ENCODE measurements at regions of chr18 and their contacts with region 1.

Region 1: GRCh38 chr18:35386600-35387351 is 9.6 kb upstream of the ZNF396 start:
- DNase-seq: peak; percentile 75
- H3K4me3 Mint-ChIP-seq: no peak overlapping the region
- H3K27ac Mint-ChIP-seq: no peak overlapping the region
- H3K4me1 Mint-ChIP-seq: peaks cover 2% of the 10 kb centered on the region
- H3K27me3 Mint-ChIP-seq: peaks cover 33% of the 10 kb centered on the region

Region 2: DNA sequence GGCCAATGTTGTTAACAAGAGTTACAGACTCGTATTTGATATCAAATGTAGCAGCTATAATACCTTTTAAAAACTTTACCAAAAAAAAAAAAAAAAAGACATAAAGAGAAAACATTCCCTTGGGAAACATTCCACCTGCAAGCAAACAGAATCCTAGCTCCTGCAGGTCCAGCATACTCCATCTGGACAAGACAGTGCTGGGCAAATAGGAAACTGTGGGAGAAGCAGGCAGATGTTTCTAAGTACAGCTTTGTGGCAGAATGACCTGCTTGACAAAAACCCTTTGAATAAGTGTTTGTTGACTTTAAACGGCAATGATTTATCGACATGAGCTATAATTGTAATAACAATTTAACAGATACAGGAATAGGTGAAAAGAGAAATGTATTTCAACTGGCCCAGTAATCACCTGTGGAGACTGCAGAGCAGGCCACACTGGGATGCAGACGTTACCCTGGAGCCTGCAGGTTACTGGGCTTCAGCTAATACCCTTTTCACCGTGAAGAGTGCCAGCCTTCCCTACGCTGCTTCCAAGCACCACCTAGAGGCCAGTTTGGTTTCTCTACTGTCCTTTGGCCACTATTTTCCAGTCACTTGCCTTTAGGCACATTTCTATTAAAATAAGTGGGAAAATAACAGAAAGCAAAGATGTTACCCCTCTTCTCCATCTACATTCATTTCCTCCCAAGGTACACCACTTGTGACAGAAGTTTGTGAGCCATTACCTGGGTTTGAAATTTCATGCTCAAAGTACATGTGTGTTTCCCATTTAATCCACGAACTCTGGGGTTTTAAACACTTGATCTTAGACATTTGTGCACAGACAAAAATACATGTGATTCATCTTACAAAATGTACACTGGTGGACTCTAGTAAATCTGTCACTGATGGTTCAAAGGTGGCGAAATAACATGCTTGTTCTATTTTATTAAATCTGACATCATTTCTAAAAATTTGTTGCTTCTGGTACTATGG is 242.9 kb before region 1 on chr18:
- CTCF ChIA-PET with region 1: no interaction called
- DNase-seq: peak; percentile 54
- H3K4me3 Mint-ChIP-seq: no peak overlapping the region
- H3K27ac Mint-ChIP-seq: no peak overlapping the region
- H3K4me1 Mint-ChIP-seq: no peaks in the 10 kb centered on the region
- H3K27me3 Mint-ChIP-seq: no peaks in the 10 kb centered on the region

Region 3: GRCh38 chr18:35231052-35231451 is 155.7 kb before region 1 on chr18:
- CTCF ChIA-PET with region 1: interaction called, 30 read pairs
- DNase-seq: peak; percentile 86
- H3K4me3 Mint-ChIP-seq: peak overlapping the region; percentile 2
- H3K27ac Mint-ChIP-seq: no peak overlapping the region
- H3K4me1 Mint-ChIP-seq: peaks cover 3% of the 10 kb centered on the region
- H3K27me3 Mint-ChIP-seq: no peaks in the 10 kb centered on the region

Region 4: GRCh38 chr18:35374708-35375107 is 12.1 kb before region 1 on chr18:
- CTCF ChIA-PET with region 1: interaction called, 11 read pairs
- DNase-seq: no peak
- H3K4me3 Mint-ChIP-seq: no peak overlapping the region
- H3K27ac Mint-ChIP-seq: no peak overlapping the region
- H3K4me1 Mint-ChIP-seq: peaks cover 16% of the 10 kb centered on the region
- H3K27me3 Mint-ChIP-seq: peaks cover 24% of the 10 kb centered on the region

Region 5: DNA sequence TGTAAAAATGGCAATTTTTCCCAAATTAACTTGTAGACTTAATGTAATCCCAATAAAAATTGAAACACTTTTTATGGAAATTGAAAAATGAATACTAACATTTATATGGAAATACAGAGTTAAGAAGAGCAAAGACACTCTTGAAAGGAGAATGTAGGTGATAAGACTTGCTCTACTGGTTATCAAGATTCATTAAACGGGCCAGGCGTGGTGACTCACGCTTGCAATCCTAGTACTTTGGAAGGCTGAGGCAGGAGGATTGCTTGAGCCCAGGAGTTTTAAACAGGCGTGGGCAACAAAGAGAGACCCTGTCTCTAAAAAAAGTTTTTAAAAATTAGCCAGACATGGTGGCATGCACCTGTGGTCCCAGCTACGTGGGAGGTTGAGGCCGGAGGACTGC is 19.9 kb after region 1 on chr18:
- CTCF ChIA-PET with region 1: interaction called, 14 read pairs
- DNase-seq: no peak
- H3K4me3 Mint-ChIP-seq: no peak overlapping the region
- H3K27ac Mint-ChIP-seq: no peak overlapping the region
- H3K4me1 Mint-ChIP-seq: peaks cover 13% of the 10 kb centered on the region
- H3K27me3 Mint-ChIP-seq: peaks cover 5% of the 10 kb centered on the region

Region 6: DNA sequence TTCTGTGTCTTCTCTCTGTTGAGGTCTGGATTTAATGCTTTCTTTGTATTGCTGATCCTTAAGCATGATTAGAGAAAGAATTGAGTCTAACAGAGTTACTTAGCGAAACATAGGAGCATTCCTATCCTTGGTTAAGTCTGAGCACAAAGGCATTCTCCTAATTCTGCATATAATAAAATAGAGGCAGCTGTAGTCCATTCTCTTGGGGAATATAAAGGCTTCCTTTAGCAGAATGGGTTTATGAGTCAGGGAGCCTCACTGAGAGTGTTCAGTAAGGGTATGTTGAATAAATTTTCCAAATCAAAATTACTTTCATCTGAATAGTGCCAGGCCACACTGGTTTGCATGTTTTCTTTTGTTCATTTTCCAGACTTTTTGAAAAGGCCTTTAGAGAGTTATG is 296.2 kb after region 1 on chr18:
- CTCF ChIA-PET with region 1: no interaction called
- DNase-seq: no peak
- H3K4me3 Mint-ChIP-seq: no peak overlapping the region
- H3K27ac Mint-ChIP-seq: no peak overlapping the region
- H3K4me1 Mint-ChIP-seq: no peaks in the 10 kb centered on the region
- H3K27me3 Mint-ChIP-seq: no peaks in the 10 kb centered on the region